Activated T-helper 2 cell treated with anti-CD3 and anti-CD28 coated beads, Interferon-gamma antibody, Interleukin-2, Interleukin-4, amounts not matched to agents 10 μg/mL and 5 μg/mL and 100 μg/mL, durations not matched to agents 14 hours and 24 hours and 36 hours (primary cell): ENCODE measurements at regions of chr4 and their contacts with region 1.

Region 1: DNA sequence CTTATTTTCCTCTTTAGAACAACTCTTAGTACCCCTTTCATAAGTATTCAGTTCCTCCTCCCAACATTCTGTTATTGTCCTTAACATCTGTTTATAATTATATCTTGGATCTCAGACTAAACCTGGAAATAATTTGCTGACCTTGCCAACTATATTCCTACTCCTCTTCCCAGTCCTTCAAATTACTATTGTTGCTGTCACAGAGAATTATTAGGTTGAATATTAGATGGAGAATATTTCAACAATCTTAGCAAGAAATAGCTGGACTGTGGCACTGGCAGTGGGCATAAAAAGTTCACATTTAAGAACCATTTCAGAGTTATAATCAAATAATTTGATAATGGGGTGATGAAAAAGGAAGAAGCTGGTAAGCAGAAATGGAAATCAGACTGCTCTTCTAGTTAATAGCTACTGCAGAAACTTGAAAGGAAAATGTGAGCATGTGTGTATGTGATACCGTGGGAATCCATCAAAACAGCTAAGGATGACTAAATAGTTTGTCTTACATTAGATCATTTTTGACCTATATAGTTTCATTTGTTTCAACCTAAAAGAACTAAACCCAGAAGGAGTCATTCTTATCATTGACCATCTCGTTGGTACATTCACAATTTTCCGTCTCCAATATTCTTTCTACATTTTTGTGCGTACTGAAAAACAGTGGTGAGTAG is 43.3 kb upstream of the PRDM8 start:
- DNase-seq: no peak
- H3K4me3 Mint-ChIP-seq: peak overlapping the region; percentile 59
- H3K27ac Mint-ChIP-seq: peak overlapping the region; percentile 97
- H3K4me1 Mint-ChIP-seq: peaks cover 18% of the 10 kb centered on the region
- H3K27me3 Mint-ChIP-seq: peaks cover 3% of the 10 kb centered on the region

Region 2: DNA sequence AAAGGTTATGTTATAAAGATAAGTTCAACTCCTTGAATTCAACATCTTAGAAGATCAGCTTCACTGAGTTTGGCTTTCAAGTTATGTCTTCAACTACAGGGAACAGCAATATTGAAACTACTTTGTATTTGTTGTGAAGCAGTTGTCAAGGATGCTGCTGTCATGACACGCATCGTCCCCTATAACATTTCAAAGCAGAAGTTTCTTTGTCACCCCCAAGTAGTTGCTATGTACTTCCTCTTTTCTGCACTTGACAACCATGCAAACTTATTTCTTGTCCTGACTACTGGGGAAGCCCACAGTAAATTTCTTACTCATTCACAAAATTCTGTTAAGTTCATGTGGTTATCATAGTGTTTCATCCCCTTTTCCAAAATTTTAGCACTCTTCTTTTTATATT is 95.3 kb before region 1 on chr4:
- intact Hi-C with region 1: loop called (anchors 1 kb)
- DNase-seq: peak; percentile 41
- H3K4me3 Mint-ChIP-seq: peak overlapping the region; percentile 72
- H3K27ac Mint-ChIP-seq: peak overlapping the region; percentile 94
- H3K4me1 Mint-ChIP-seq: peaks cover 42% of the 10 kb centered on the region
- H3K27me3 Mint-ChIP-seq: no peaks in the 10 kb centered on the region

Region 3: GRCh38 chr4:80097400-80098177 is 56.4 kb before region 1 on chr4:
- intact Hi-C with region 1: no loop called
- DNase-seq: no peak
- H3K4me3 Mint-ChIP-seq: no peak overlapping the region
- H3K27ac Mint-ChIP-seq: no peak overlapping the region
- H3K4me1 Mint-ChIP-seq: peaks cover 8% of the 10 kb centered on the region
- H3K27me3 Mint-ChIP-seq: peaks cover 36% of the 10 kb centered on the region

Region 4: DNA sequence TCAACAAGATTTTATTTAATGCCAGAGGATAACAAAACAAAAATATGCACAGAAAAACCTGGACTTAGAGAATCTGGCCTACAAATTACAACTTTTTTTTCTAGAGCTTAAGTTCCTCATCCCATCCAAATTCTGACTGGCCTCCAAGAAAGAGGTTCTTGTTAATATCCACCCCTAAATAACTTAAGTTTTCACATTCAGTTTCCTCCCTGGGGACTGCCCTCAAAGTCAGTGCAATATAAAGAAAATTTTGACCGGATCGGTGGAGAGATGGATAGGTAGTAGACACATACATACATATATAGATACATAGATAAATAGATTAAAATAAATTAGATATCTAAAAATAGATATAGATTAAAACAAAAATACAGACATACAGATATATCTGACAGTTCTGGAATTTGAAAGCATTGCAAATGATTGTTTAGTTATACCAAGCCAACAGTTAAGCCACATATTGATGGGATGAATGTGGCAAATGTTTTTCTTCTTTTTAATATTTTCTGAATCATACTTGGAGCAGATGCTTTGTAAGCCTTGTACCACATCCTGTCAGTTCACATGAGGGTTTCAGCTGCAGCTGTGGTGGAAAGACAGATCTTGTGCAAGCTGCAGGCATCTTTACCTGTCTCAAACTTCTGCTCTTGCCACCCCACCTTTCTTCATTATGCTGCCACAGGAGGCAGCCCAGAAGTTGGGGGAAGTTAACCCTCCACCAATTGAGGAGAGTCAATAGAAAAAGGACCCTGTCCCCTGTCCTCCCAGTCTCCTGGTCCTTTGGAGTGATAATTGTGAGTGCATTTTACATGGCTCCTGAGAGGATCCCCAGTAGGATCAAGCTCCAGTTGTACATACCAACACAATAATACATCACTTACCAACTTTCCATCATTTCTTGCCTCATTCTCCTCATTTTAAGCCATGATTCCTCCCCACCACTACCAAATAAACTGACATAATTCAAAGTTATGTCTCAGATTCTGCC is 15.2 kb before region 1 on chr4:
- intact Hi-C with region 1: loop called (anchors 1 kb)
- DNase-seq: peak; percentile 54
- H3K4me3 Mint-ChIP-seq: peak overlapping the region; percentile 2
- H3K27ac Mint-ChIP-seq: peak overlapping the region; percentile 83
- H3K4me1 Mint-ChIP-seq: peaks cover 62% of the 10 kb centered on the region
- H3K27me3 Mint-ChIP-seq: no peaks in the 10 kb centered on the region

Region 5: GRCh38 chr4:80240976-80241375 is 87.0 kb after region 1 on chr4:
- intact Hi-C with region 1: no loop called
- DNase-seq: no peak
- H3K4me3 Mint-ChIP-seq: no peak overlapping the region
- H3K27ac Mint-ChIP-seq: no peak overlapping the region
- H3K4me1 Mint-ChIP-seq: no peaks in the 10 kb centered on the region
- H3K27me3 Mint-ChIP-seq: peaks cover 5% of the 10 kb centered on the region

Region 6: GRCh38 chr4:80266253-80266901 is 112.4 kb after region 1 on chr4 and contains the start of gene FGF5:
- intact Hi-C with region 1: no loop called
- DNase-seq: no peak
- H3K4me3 Mint-ChIP-seq: no peak within 1 kb of the TSS
- H3K27ac Mint-ChIP-seq: no peak within 1 kb of the TSS
- H3K4me1 Mint-ChIP-seq: peaks cover 14% of the 10 kb centered on the region
- H3K27me3 Mint-ChIP-seq: peaks cover 82% of the 10 kb centered on the region
- total RNA-seq, gene FGF5: 0.02 TPM in 1 of 2 replicates, not detected in the other

Region 7: GRCh38 chr4:80393246-80393969 is 239.4 kb after region 1 on chr4:
- intact Hi-C with region 1: no loop called
- DNase-seq: no peak
- H3K4me3 Mint-ChIP-seq: no peak overlapping the region
- H3K27ac Mint-ChIP-seq: peak overlapping the region; percentile 14
- H3K4me1 Mint-ChIP-seq: no peaks in the 10 kb centered on the region
- H3K27me3 Mint-ChIP-seq: no peaks in the 10 kb centered on the region